Endothelial cell of umbilical vein (primary cell): ENCODE measurements at regions of chr13 and their contacts with region 1.

Region 1: DNA sequence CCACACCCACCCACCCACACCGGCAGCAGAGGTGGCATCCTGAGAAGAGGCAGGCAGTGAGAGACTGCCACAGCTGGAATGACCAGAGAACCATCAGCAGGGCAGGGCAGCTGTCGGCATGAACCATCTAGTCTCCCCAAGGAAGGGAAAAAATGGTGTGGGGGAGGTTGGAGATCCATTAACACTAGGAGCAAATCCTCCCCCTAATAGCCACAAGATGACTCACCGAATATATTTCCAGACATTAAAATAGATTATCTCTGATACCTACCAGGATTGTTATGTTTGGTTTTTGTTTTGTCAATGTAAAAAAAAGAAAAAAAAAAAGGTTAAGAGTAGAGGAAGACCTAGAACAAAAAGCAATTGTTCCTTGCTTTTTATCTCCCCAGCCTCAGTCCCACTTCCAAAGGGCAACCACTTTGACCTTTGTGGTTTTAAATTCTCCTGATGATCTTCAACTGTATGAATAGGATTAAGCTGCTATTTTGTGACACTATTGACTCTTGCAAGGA is 34.2 kb downstream of the THSD1 start:
- DNase-seq: peak; percentile 76
- H3K4me3 ChIP-seq: no peak overlapping the region
- H3K27ac ChIP-seq: no peak overlapping the region
- H3K4me1 ChIP-seq: peaks cover 34% of the 10 kb centered on the region
- H3K27me3 ChIP-seq: no peaks in the 10 kb centered on the region
- CTCF ChIP-seq: no peak
- POLR2A ChIP-seq: no peak

Region 2: DNA sequence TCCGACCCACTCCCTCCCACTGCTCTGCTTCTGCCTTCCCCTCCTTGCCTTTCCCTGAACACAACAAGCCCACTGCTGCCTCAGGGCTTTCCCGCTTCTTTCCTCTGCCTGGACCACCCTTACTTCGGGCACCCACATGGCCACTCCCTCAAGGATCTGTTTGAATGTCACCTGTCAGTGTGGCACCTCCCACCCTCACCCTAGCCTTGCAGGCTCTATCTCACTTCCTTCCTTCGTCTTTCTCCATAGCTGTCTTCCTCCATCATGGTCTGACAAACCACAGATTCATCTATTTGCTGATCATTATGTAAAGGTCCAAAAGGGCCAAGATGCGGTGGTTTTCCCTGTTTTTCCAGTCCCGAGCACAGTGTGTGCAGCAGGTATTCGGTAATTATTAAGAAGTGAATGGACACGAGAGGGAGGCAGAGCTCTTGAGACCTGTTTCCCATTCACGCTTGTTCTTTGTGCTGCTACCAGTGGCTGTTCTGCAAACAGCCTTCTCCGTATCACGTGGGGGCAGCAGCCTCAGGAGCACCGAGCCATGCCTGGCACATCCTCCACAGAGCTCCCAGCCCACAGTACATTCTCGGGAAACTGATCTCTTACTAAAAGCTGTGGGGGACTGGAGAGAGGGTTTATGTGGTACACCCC is 459.8 kb before region 1 on chr13:
- CTCF ChIA-PET with region 1: no interaction called
- POLR2A ChIA-PET with region 1: no interaction called
- dilution Hi-C with region 1: no loop called
- intact Hi-C with region 1: no loop called
- DNase-seq: no peak
- H3K4me3 ChIP-seq: no peak overlapping the region
- H3K27ac ChIP-seq: no peak overlapping the region
- H3K4me1 ChIP-seq: no peaks in the 10 kb centered on the region
- H3K27me3 ChIP-seq: peaks cover 0 to 2% of the 10 kb centered on the region in 2 experiments
- CTCF ChIP-seq: no peak
- POLR2A ChIP-seq: no peak

Region 3: DNA sequence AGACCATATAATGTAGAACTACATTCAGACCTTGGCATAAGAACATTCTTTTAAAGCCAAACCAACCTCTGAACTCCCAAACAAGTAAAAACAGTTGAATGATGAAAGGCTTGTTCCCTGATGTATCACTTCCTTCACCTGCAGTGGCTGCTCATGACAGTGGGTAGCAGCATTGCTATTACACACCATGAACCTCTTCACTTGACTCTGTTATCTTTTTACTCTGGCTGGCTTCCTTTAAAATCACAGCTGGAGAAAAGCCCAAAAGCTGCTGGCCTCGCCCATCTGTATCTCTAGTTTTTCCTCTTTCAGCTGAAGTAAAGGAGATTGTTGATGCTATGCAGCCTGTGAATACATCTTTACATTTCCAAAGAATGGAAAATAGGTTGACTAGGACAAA is 11.6 kb after region 1 on chr13:
- CTCF ChIA-PET with region 1: interaction called, 6 read pairs
- POLR2A ChIA-PET with region 1: no interaction called
- dilution Hi-C with region 1: no loop called
- intact Hi-C with region 1: loop called (anchors 2 kb)
- DNase-seq: peak; percentile 7
- H3K4me3 ChIP-seq: no peak overlapping the region
- H3K27ac ChIP-seq: no peak overlapping the region
- H3K4me1 ChIP-seq: peaks cover 5% of the 10 kb centered on the region
- H3K27me3 ChIP-seq: no peaks in the 10 kb centered on the region
- CTCF ChIP-seq: no peak
- POLR2A ChIP-seq: no peak

Region 4: GRCh38 chr13:52405767-52406494 is 34.1 kb after region 1 on chr13 and contains the start of gene THSD1:
- CTCF ChIA-PET with region 1: no interaction called
- POLR2A ChIA-PET with region 1: no interaction called
- dilution Hi-C with region 1: no loop called
- intact Hi-C with region 1: loop called (anchors 2 kb)
- DNase-seq: peak; percentile 71
- H3K4me3 ChIP-seq: peak within 1 kb of the TSS; percentile 71 to 99 (median 74)
- H3K27ac ChIP-seq: peak within 1 kb of the TSS; percentile 81
- H3K4me1 ChIP-seq: peaks cover 21% of the 10 kb centered on the region
- H3K27me3 ChIP-seq: no peaks in the 10 kb centered on the region
- CTCF ChIP-seq: no peak
- POLR2A ChIP-seq: peak; percentile 81
- total RNA-seq, gene THSD1: 25.2 and 25.4 TPM in 2 replicates

Region 5: GRCh38 chr13:52738719-52739467 is 367.1 kb after region 1 on chr13:
- CTCF ChIA-PET with region 1: no interaction called
- POLR2A ChIA-PET with region 1: no interaction called
- dilution Hi-C with region 1: no loop called
- intact Hi-C with region 1: no loop called
- DNase-seq: peak; percentile 15
- H3K4me3 ChIP-seq: peak overlapping the region; percentile 17 to 24 (median 23)
- H3K27ac ChIP-seq: no peak overlapping the region
- H3K4me1 ChIP-seq: peaks cover 6% of the 10 kb centered on the region
- H3K27me3 ChIP-seq: peaks cover 28 to 56% of the 10 kb centered on the region in 2 experiments
- CTCF ChIP-seq: peak; percentile 61 to 63
- POLR2A ChIP-seq: no peak